IMR-90 (cell line): ENCODE measurements at regions of chr11 and their contacts with region 1.

Region 1: DNA sequence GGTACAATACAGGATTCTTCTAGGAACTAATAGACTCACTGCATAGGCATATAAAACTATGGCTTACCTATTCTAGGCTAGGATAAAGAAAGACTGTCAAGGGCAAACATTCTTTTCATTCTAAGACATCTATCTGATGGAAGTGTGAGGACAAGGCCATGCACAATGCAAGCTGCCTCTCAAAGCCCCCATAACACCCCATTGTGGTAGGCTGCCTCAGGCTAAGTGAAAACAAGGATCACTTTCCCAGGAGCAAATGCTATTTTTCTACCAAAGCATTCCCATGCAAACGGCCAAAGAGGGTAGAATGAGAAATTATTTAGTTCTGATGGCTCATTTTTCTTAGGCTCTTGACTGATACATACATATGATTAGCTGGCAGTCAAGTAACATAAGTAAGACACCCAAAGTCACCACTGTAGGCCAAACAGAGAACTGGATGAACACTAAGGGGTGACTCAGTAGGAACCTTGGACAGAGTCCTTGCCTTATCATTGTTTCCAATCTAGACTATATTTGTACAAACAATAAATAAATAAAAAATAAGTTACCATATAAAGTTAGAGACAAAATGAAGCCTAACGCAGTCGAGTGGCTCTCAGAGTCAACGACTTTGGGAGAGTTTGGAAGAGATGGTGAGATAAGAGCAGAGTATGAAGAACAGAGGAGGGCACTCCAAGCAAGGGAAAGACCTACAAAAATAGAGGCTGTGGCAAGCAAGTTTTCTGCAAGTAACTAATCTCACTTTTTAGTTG is 303.6 kb downstream of the SBF2 start:
- DNase-seq: peak; percentile 37
- ATAC-seq: peak; percentile 53
- H3K4me3 ChIP-seq: no peak overlapping the region
- H3K27ac ChIP-seq: no peak overlapping the region
- H3K4me1 ChIP-seq: peaks cover 2% of the 10 kb centered on the region
- H3K27me3 ChIP-seq: no peaks in the 10 kb centered on the region
- CTCF ChIP-seq: peak; percentile 41
- POLR2A ChIP-seq: no peak
- RAD21 ChIP-seq: peak; percentile 53

Region 2: GRCh38 chr11:9739123-9739894 is 251.1 kb before region 1 on chr11:
- CTCF ChIA-PET with region 1: no interaction called
- POLR2A ChIA-PET with region 1: no interaction called
- dilution Hi-C with region 1: no loop called
- in situ Hi-C with region 1: no loop called
- intact Hi-C with region 1: no loop called
- DNase-seq: no peak
- ATAC-seq: no peak
- H3K4me3 ChIP-seq: no peak overlapping the region
- H3K27ac ChIP-seq: no peak overlapping the region
- H3K4me1 ChIP-seq: no peaks in the 10 kb centered on the region; the same call in 1 of the 2 replicates
- H3K27me3 ChIP-seq: no peaks in the 10 kb centered on the region
- CTCF ChIP-seq: no peak
- POLR2A ChIP-seq: no peak
- RAD21 ChIP-seq: no peak

Region 3: DNA sequence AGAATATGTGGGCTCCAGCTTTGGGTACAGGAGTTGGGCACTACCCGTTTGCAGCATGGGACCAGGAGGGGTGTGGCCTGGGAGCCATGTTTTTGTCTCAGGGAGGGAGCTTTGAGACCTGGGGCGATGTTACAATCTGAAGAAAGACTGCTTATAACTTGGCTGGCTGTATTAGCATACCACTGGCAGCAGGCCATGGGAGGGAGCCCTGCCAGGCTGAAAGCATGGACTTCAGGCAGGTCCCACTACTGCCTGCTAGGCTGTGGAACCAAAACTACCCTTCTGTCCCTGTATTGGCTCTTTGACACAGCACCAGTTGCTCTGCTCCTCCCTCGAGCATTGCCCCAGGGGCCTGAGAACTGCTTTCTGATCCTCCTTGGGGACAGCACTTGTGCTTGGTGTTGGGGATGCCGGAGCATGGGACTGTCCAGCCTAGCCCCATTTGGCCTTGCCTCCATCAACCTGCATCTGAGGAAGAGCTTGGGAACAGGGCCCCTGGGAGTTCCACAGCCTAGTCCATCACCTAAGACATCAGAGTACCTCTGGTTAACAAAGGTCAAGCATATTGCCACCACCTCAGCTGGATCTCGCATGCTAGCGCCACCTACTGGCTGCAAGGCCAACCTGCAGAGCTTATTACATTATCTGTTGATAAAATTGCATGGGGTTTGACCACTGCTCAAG is 86.2 kb after region 1 on chr11:
- CTCF ChIA-PET with region 1: no interaction called
- POLR2A ChIA-PET with region 1: no interaction called
- dilution Hi-C with region 1: no loop called
- in situ Hi-C with region 1: no loop called
- intact Hi-C with region 1: loop called (anchors 5 kb)
- DNase-seq: peak; percentile 63
- ATAC-seq: peak; percentile 72
- H3K4me3 ChIP-seq: no peak overlapping the region
- H3K27ac ChIP-seq: no peak overlapping the region
- H3K4me1 ChIP-seq: peaks cover 15% of the 10 kb centered on the region
- H3K27me3 ChIP-seq: no peaks in the 10 kb centered on the region
- CTCF ChIP-seq: peak; percentile 44
- POLR2A ChIP-seq: no peak
- RAD21 ChIP-seq: peak; percentile 34; the same call in 1 of the 2 replicates